ENCODE measurements at regions of chr3 and their contacts with region 1.

Region 1: GRCh38 chr3:45043728-45044299 is 17.7 kb downstream of the CLEC3B start:
- DNase-seq: no peak
- H3K4me3 Mint-ChIP-seq: no peak overlapping the region
- H3K27ac Mint-ChIP-seq: no peak overlapping the region
- H3K4me1 Mint-ChIP-seq: no peaks in the 10 kb centered on the region
- H3K27me3 Mint-ChIP-seq: peaks cover 22% of the 10 kb centered on the region
- CTCF ChIP-seq: no peak

Region 2: GRCh38 chr3:44992555-44993470 is 51.0 kb before region 1 on chr3:
- CTCF ChIA-PET with region 1: no interaction called
- intact Hi-C with region 1: no loop called
- DNase-seq: peak; percentile 13
- H3K4me3 Mint-ChIP-seq: no peak overlapping the region
- H3K27ac Mint-ChIP-seq: no peak overlapping the region
- H3K4me1 Mint-ChIP-seq: peaks cover 35% of the 10 kb centered on the region
- H3K27me3 Mint-ChIP-seq: no peaks in the 10 kb centered on the region
- CTCF ChIP-seq: peak; percentile 59

Region 3: DNA sequence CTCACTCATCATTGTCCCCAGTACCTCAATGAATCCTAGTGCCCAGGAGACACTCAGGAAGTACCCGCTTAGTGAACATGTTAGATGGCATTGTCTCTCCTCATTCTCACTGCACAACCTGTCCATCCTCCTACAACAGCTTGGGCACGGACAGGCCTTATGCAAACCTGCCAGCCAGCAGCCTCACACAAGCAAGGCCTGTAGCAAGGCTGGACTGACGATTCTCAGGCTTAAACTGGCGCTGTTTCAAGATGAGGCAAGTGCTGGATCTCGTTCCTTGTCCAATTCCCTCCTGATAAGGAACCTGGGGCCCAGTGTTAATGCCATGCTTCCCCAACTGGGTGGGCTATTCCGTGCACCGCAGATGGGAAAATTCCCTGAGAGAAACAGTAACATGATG is 43.3 kb after region 1 on chr3:
- CTCF ChIA-PET with region 1: no interaction called
- intact Hi-C with region 1: loop called (anchors 2 kb)
- DNase-seq: no peak
- H3K4me3 Mint-ChIP-seq: no peak overlapping the region
- H3K27ac Mint-ChIP-seq: no peak overlapping the region
- H3K4me1 Mint-ChIP-seq: no peaks in the 10 kb centered on the region
- H3K27me3 Mint-ChIP-seq: no peaks in the 10 kb centered on the region
- CTCF ChIP-seq: no peak

Region 4: DNA sequence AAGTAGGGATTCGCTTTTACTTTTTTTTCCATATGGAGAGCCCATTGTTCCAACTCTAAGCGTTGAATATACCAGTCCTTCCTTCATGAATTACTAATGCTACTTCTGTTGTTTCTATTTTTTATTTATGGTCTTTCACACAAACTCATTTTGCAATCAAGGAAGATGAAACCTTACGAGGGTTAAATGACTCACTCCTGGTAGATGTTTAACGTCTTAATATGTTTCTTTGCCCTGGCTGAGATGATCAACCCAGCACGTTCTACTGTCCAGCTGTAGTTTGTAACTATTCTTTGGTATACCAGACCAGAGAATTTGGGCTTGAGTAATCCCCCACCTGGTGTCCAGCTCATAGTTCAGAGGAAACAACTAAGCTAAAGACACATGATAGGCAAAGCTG is 79.2 kb after region 1 on chr3:
- CTCF ChIA-PET with region 1: interaction called, 4 read pairs
- intact Hi-C with region 1: loop called (anchors 5 kb)
- DNase-seq: no peak
- H3K4me3 Mint-ChIP-seq: peak overlapping the region; percentile 21
- H3K27ac Mint-ChIP-seq: peak overlapping the region; percentile 83
- H3K4me1 Mint-ChIP-seq: peaks cover 77% of the 10 kb centered on the region
- H3K27me3 Mint-ChIP-seq: no peaks in the 10 kb centered on the region
- CTCF ChIP-seq: no peak

Region 5: DNA sequence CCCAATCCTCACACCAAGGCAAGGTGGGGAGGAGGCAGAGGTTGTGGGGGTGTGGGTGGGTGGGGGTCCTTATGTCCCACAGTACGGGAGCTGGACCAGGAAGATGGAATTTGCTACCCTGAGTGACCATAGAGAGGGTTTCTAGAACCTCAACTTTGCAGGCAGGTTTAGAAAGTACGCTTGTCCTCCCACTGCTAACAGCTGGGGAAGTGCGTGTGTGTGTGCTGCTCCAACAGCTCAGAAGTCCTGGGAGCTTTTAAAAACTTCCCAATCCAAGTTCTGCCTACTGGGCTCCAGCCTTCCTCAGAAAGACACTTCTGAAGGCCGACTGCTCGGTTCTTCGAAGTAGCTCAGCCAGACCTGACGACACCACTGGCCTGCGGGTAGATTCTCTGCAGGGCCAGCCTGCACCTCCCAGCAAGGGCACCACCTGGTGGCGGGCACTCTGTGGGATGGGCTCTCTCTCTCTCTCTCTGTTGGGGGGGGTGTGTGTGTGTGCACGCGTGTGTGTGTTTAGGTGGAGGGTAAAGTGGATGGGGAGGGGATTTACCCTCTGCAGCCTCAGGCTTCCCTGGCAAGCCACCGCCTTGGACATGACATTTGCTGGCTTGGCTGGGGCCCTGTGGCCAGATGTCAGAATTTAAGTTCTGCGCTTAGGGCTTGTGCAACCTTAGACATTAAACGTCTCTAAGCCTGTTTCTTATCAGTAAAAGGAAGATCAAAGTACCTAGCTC is 166.7 kb after region 1 on chr3:
- CTCF ChIA-PET with region 1: interaction called, 46 read pairs
- intact Hi-C with region 1: loop called (anchors 1 kb)
- DNase-seq: peak; percentile 88
- H3K4me3 Mint-ChIP-seq: no peak overlapping the region
- H3K27ac Mint-ChIP-seq: no peak overlapping the region
- H3K4me1 Mint-ChIP-seq: peaks cover 8% of the 10 kb centered on the region
- H3K27me3 Mint-ChIP-seq: peaks cover 13% of the 10 kb centered on the region
- CTCF ChIP-seq: peak; percentile 78

Region 6: GRCh38 chr3:45499529-45499928 is 455.7 kb after region 1 on chr3:
- CTCF ChIA-PET with region 1: interaction called, 12 read pairs
- intact Hi-C with region 1: loop called (anchors 2 kb)
- DNase-seq: no peak
- H3K4me3 Mint-ChIP-seq: no peak overlapping the region
- H3K27ac Mint-ChIP-seq: no peak overlapping the region
- H3K4me1 Mint-ChIP-seq: no peaks in the 10 kb centered on the region
- H3K27me3 Mint-ChIP-seq: no peaks in the 10 kb centered on the region
- CTCF ChIP-seq: no peak